ENCODE measurements at regions of chr2 and their contacts with region 1.

Region 1: GRCh38 chr2:96116879-96117697 is 717 bp upstream of the ADRA2B start:
- DNase-seq: peak in 39 of 42 donors; percentile 17 to 82 (median 59)

Region 2: DNA sequence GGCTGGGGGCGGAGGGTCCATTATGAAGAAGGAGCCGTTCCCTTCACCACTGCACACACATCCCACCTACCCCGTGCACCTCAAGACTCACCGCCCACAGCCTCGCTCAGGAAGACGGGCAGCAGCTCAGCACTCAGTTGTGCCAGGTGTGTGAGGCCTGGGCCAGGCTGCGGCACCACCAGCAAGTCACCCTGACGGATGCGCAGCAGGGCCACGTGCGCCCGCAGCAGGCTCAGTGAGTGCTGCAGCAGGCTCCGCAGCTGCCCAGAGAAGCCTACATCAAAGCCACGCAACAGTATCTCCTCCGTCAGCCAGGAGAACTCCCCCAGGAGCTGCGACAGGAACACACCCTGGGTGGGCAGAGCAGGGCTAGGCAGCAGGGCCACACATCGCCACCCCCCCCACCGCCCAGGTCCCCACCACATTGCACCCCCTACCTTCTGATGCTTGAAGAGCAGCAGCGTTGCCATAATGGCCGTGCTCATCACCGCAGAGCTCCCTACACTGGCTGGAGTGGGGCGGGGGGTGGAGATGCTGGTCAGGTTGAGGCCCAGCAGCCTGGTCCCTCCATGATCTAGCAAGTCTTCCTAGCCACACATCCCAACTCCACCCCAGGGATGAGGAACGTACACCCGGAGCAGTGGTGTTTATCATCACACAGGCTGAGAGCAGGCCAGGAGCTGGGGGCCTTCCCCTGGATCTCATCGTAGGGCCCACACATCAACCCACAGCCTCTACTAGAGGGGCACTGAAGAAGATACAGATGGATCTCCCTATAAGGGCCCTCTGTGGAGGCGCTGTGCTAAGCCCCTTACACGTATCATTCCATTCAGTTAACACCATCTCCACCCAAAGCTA is 92.5 kb before region 1 on chr2:
- intact Hi-C with region 1: loop called (anchors 10 kb)
- DNase-seq: peak in 30 of 42 donors; percentile 29 to 79 (median 58)

Region 3: DNA sequence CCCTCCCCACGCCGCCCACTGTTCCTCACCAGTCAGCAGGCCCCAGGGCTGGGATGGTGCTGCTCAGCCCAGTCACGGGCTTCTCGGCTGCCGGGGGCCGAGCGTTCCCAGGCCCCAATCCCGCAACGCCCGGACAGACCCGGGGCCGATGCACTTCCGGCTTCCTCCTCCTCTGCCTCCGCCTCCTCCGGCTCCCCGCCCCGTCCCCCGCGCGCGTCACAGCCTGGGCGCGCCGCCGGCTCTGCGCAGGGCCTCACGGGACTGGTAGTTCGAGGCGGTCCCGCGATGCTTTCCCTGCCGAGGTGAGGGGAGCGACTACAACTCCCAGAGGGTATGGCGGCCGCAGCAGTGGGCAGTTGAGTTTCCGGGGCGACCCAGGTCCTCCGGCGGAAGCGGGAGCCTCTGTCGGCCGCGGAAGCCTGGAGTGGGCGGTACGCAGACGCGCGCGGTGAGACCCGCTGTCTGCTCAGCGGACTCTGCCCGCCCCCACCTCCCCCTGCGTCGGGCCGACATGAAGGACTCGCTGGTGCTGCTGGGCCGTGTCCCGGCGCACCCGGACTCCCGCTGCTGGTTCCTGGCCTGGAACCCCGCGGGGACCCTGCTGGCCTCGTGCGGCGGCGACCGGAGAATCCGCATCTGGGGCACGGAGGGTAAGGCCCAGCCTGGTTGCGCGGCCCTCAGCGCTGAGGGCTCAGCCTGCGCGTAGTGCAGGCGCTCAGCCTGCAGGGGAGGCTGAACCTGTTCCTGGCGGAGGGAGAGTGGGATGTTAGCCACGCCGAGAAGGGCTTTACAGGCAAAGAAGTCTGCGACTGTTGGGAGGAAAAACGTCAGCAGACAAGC is 149.0 kb after region 1 on chr2 and contains the starts of genes CIAO1 and TMEM127:
- intact Hi-C with region 1: no loop called
- DNase-seq: peak; percentile 97 to 100 (median 99)

Region 4: GRCh38 chr2:96276787-96277499 is 159.9 kb after region 1 on chr2:
- intact Hi-C with region 1: no loop called
- DNase-seq: peak in 30 of 42 donors; percentile 20 to 85 (median 54)

Region 5: DNA sequence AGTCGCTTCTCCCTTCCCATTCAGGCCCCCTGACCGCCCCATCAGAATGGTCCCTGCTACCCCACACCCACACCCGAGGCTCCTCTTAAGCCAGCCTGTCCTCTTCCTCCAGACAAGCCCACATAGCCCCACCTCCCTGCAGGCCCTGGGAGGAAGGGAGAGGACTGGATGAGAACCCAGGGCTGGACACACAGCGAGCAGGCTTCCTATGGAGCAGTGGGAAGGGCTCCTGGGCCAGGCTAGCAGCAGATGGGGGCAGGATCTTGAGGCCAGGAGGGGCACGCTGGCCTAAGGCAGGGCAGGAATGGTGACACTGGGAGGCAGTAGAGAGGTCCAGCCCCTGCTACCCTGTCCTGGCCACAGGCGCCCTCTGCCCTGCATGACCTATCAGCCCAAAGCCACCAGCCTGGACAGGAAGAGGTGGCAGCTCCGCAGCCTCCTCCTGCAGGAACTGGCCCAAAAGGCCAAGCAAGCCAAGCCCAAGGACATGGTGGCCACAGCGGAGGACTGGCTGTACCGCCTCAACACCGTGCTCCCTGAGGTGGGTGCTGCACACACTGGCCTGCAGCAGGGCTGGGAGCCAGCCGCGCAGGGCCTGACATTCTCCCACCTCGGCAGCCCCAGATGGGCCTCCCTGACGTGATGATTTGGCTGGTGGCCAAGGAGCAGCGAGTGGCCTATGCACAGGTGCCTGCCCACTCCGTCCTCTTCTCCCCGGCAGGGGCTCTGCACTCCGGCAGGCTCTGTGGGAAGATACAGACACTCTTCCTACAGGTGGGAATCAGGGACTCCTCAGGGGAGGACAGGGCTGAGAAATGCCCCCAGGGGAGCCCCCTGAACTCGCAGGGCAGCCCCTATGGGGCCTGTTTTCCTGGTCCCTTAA is 568.7 kb after region 1 on chr2:
- intact Hi-C with region 1: no loop called
- DNase-seq: no peak